ENCODE measurements at regions of chr1 and their contacts with region 1.

Region 1: DNA sequence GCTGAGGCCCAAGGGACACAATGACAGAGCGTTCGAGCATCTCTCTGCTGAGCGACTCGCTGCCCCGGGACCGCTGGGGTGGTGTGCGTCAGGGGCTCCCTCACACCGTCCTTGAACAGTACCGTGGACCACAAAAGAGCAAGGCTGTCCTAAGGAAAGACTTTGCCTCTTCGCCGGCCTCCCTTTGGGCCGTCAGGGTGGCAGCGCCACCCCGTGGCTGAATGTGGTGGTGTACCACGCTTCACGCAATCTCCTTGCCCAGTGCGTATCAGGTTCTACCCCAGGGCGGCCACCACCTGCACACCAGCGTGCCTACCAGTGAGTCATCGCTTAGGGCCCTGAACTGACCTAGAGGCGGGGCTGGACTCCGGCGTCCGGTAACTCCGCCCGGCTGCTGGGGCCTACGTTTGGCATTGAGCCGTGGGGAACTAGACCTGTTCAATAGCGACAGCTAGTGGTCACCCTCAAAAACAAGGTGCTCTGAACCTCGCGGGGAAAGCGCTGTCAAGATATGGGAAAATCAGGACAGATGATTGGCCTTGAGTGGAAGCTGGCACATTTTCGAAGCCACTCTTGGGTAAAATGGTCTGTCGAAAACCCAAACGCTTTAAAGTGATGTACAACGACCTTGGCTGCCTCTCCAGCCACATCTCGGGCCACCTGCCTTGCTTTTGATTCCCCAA is 8.1 kb upstream of the TRAF3IP3 start:
- DNase-seq: peak; percentile 95
- H3K4me3 Mint-ChIP-seq: peak overlapping the region; percentile 83
- H3K27ac Mint-ChIP-seq: peak overlapping the region; percentile 88
- H3K4me1 Mint-ChIP-seq: peaks cover 70% of the 10 kb centered on the region
- H3K27me3 Mint-ChIP-seq: no peaks in the 10 kb centered on the region

Region 2: DNA sequence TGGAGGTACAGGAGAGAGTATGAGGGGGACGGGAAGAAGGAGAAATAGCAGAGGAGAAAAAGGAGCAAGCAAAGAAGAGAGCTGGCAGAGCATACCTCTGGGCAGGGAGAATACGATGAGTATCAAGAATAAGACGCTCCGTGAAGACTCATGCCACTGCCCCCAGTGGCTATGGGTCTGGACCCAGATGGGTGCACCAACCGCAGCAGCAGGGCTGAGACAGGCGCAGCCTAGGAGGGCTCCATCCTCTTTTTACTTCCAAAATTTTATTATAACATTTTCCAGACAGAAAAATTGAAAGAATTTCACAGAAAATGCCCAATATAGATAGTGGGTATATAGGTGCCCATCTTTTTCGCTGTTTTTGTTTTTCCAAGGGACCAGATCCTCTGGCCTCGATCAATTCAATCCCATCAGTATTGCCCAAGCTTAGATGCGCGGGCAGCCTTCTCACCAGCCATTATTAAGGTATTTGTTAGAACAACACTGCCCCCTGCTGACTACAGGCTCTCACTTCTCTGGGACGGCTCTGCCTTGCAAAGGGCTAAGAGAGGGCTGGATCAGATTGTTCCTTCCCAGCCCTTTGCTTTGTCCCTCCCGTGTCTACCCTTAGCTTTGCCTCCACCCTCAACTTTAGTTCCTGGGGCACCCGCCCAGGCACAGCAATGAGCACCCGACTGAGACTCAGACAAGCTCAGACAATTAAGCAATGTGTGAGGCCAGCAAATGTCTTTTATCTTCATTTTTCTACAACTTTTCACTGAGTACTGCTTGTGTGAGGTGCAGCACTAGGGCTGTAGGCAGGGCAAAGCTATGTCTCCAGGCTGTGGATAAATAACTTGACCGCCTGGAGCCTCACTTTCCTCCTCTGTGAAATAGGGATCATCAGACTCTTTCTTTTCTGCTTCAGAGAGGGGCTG is 181.7 kb before region 1 on chr1:
- intact Hi-C with region 1: loop called (anchors 1 kb)
- DNase-seq: peak; percentile 93
- H3K4me3 Mint-ChIP-seq: no peak overlapping the region
- H3K27ac Mint-ChIP-seq: no peak overlapping the region
- H3K4me1 Mint-ChIP-seq: peaks cover 23% of the 10 kb centered on the region
- H3K27me3 Mint-ChIP-seq: peaks cover 39% of the 10 kb centered on the region

Region 3: GRCh38 chr1:209601809-209602657 is 145.7 kb before region 1 on chr1:
- intact Hi-C with region 1: loop called (anchors 1 kb)
- DNase-seq: peak; percentile 77
- H3K4me3 Mint-ChIP-seq: no peak overlapping the region
- H3K27ac Mint-ChIP-seq: no peak overlapping the region
- H3K4me1 Mint-ChIP-seq: peaks cover 8% of the 10 kb centered on the region
- H3K27me3 Mint-ChIP-seq: peaks cover 32% of the 10 kb centered on the region

Region 4: DNA sequence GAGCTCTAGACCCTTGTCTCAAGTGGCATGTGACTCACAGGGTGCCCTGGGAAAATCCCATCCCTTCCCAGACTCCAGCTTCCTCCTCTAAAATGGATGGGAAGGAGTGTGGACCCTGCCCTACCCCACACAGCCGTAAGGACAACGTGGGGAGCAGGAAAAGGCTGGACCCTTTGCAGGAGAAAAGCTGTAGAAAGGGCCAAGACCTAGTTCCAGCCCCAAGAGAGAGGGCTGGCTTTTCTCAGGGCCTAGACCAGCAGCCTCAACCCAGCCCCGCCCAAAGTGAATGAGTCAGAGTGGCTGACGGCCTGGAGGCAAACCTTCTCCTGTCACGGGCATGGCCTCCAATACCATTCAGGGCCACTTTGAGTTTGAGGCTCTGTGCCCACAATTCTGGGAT is 96.6 kb before region 1 on chr1:
- intact Hi-C with region 1: loop called (anchors 2 kb)
- DNase-seq: peak; percentile 92
- H3K4me3 Mint-ChIP-seq: peak overlapping the region; percentile 56
- H3K27ac Mint-ChIP-seq: peak overlapping the region; percentile 73
- H3K4me1 Mint-ChIP-seq: peaks cover 64% of the 10 kb centered on the region
- H3K27me3 Mint-ChIP-seq: no peaks in the 10 kb centered on the region

Region 5: DNA sequence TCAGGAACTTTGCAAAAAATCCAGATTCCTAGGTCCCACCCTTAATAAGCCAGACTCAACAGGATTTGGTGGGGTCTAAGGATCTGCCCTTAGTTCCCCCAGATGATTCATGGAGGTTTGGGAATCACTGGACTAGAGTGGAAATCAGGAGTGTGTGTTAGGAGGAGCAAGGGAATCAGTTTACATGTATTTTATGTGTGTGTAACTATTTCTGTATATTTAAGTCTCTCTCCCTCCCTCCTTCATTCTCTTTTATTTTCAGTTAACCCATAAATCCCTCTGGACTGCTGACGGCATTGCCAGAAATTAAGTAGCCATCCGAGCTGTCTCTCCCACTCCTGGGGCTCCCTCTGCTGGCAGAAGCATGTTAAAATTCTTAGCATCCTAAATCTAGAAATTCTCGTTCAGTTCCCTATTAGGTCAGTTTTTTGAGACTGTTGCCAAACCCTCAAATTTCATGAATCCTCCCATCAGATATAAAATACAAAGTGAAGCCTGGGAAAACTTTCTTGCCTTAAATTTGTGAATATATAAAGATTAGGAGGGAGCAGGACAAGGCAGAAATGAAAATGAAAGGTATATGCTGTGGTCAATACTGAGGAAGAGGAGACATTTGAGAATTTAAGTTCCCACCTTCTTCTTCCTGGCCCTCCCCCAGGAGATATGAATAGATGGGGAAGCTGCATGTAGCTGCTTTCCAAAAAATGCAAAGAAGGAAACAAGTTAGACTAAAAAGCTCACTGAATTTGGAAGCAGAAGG is 54.8 kb before region 1 on chr1:
- intact Hi-C with region 1: loop called (anchors 1 kb)
- DNase-seq: peak; percentile 92
- H3K4me3 Mint-ChIP-seq: peak overlapping the region; percentile 37
- H3K27ac Mint-ChIP-seq: peak overlapping the region; percentile 57
- H3K4me1 Mint-ChIP-seq: peaks cover 62% of the 10 kb centered on the region
- H3K27me3 Mint-ChIP-seq: no peaks in the 10 kb centered on the region

Region 6: DNA sequence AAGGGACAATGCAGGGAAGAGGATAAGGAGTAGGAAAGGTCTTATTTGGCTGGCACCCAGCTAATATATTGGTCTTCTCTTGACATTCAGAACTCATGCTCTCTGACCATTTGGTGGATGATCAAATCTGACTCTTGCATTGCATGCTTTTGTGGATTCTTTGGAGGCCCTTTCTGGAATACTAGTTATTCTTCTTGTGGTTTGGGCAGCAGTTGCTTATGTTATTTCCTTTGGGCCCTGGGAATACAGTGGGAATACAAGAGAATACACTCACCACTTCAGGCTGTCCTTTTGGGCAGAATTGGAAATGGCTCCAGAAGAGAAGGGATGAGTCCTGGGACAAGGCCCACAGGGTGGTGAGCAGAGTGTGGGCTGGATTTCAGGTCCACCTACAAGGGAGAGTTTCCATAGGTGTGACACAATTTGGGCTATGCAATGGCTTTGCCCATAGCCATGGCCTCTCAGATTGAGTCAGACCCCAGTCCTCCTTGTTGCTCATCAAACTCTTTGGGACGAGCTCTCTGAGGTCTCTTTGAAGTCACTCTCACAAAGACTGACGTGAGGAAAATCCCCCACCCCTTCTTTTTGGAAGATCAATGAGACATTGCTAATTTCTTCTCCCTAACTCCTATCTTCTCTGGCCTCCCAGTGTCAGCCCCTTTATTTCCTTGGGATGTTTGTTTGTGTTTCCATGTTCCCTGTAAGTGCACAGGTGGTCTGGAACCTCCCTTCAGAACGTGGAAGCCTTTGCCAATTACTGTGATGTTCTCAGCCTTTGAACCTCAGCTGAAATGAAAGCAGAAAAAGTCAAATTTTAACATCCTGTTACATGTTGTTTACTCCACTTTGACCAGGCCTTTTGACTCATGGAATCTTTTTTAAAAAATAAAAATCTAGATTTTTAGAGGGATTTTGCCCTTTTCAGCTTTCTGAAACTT is 23.7 kb before region 1 on chr1:
- intact Hi-C with region 1: loop called (anchors 1 kb)
- DNase-seq: peak; percentile 83
- H3K4me3 Mint-ChIP-seq: peak overlapping the region; percentile 47
- H3K27ac Mint-ChIP-seq: peak overlapping the region; percentile 100
- H3K4me1 Mint-ChIP-seq: peaks cover 55% of the 10 kb centered on the region
- H3K27me3 Mint-ChIP-seq: no peaks in the 10 kb centered on the region

Region 7: DNA sequence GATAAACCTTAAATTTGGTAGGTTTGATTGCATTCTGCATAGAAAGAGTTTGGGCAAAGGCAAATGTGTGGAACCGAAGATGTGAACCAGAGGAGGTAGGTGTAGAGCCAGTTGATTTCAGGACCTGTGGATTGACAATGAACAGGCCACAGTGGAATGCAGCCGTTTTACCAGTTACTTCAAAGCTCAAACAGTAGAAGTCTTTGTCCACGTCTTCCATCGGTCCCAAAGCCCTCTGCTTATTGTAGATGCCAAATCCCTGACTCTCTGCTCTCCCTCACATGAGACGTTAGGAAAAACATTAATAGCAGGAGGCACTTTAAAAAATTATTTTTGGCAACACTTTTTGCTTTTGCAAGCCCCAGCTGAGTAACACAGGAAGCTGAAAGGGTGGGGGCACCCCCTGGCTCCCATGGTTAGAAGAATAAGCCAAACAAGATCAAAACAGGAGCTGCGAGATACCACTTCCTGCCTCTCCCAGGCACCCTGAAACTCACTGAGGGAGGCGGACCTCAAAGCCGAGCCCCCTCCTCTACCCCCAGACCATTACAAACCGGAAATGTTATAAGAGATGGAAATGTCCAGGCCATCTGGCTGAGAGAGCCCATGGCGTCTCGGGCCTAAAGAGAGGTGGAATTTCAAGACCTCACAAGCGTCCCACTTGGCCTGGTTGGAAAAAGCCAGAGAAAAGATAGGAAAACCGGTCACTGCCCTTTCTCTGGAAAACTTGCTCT is 21.6 kb after region 1 on chr1:
- intact Hi-C with region 1: loop called (anchors 1 kb)
- DNase-seq: peak; percentile 93
- H3K4me3 Mint-ChIP-seq: no peak overlapping the region
- H3K27ac Mint-ChIP-seq: no peak overlapping the region
- H3K4me1 Mint-ChIP-seq: peaks cover 39% of the 10 kb centered on the region
- H3K27me3 Mint-ChIP-seq: no peaks in the 10 kb centered on the region

Region 8: DNA sequence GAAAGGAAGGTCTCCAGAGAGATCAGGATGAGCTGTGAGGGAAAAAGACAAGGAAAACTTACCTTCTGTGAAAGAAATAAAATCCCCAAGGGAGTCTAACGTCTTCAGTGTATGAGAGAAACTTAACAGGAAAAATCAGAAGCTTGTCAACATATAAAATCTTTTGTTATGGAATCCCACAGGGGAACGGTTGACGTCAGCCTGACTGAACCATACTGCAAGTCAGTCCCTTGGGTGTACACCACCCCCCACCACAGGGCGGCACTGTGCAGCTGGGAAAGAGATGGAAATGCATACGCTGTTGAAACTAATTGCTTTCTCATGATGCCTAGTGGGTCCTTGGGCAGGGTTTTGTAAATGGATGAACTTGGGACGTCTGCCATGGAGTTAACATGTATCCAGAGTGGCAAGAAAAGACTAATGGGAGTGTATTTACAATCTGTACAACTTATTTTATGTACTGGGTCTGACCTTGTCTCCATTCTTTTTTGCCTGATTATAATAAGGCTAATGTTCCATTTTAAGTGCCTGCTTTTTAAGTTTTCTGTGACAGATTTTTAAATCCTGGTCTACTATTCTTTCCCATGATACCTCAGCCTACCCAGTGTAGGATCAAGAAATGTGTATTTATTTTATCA is 102.7 kb after region 1 on chr1:
- intact Hi-C with region 1: no loop called
- DNase-seq: no peak
- H3K4me3 Mint-ChIP-seq: no peak overlapping the region
- H3K27ac Mint-ChIP-seq: no peak overlapping the region
- H3K4me1 Mint-ChIP-seq: peaks cover 8% of the 10 kb centered on the region
- H3K27me3 Mint-ChIP-seq: no peaks in the 10 kb centered on the region

Measured in activated CD4-positive, alpha-beta T cell treated with anti-CD3 and anti-CD28 coated beads, Interleukin-2, amount 10 ng/mL, durations not matched to agents 24 days and 14 days (primary cell).